ENCODE measurements at regions of chr6 and their contacts with region 1.

Region 1: GRCh38 chr6:90226257-90226656 is 70.4 kb downstream of the BACH2 start:
- DNase-seq: no peak
- H3K4me3 ChIP-seq: no peak overlapping the region
- H3K27ac ChIP-seq: peak overlapping the region in 6 of 59 donors; percentile 8 to 48 (median 24)
- H3K27me3 ChIP-seq: no peaks in the 10 kb centered on the region
- CTCF ChIP-seq: no peak

Region 2: GRCh38 chr6:90212274-90212673 is 14.0 kb before region 1 on chr6:
- intact Hi-C with region 1: no loop called
- DNase-seq: no peak
- H3K4me3 ChIP-seq: no peak overlapping the region
- H3K27ac ChIP-seq: no peak overlapping the region
- H3K27me3 ChIP-seq: no peaks in the 10 kb centered on the region
- CTCF ChIP-seq: peak in 4 of 56 donors; percentile 6 to 23 (median 12)

Region 3: GRCh38 chr6:90285611-90286381 is 59.5 kb after region 1 on chr6:
- intact Hi-C with region 1: loop called in 1 of 2 experiments (anchors 5 kb)
- DNase-seq: peak; percentile 55 to 84 (median 78)
- H3K4me3 ChIP-seq: peak overlapping the region in 53 of 59 donors; percentile 7 to 58 (median 33)
- H3K27ac ChIP-seq: peak overlapping the region in 21 of 59 donors; percentile 0 to 60 (median 39)
- H3K27me3 ChIP-seq: no peaks in the 10 kb centered on the region
- CTCF ChIP-seq: peak in 7 of 56 donors; percentile 9 to 40 (median 27)